T-cell (primary cell): ENCODE measurements at regions of chr3 and their contacts with region 1.

Region 1: DNA sequence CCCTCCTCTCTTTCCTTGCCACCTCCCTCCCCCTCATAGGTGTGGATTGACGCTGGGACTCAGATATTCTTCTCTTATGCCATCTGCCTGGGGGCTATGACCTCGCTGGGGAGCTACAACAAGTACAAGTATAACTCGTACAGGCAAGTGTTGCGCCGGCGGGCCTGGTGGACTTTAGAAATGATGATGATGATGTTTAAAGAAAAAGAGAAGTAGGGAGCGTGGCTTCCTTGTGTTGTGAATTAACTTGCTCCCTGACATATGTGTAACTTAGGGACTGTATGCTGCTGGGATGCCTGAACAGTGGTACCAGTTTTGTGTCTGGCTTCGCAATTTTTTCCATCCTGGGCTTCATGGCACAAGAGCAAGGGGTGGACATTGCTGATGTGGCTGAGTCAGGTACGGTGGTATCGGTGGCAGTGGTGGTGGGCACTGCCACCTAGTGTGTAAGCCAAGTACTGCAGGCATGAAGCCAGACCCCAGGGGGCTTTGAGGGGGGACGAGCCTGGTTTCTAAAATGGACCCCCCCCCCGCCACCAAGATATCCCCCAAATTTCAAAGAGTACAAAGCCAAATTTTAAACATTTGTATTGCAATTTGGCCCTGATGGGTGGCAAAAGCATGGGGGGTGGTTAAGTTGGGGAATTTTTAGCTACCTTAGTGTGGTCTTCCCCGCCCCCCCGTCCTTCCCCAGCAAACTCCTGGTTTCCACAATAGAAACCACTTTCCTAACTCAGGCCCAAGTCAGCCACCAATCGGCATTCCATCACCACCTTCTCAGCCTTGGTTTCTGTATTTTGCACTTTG is 65.6 kb downstream of the SLC6A6 start:
- DNase-seq: peak in 30 of 35 experiments; percentile 8 to 72 (median 31)
- ATAC-seq: peak; percentile 47 to 77 (median 66)
- H3K4me3 ChIP-seq: no peak overlapping the region
- H3K4me3 Mint-ChIP-seq: no peak overlapping the region
- H3K27ac ChIP-seq: no peak overlapping the region
- H3K27ac Mint-ChIP-seq: no peak overlapping the region
- H3K4me1 ChIP-seq: no peaks in the 10 kb centered on the region
- H3K4me1 Mint-ChIP-seq: no peaks in the 10 kb centered on the region
- H3K27me3 ChIP-seq: no peaks in the 10 kb centered on the region
- H3K27me3 Mint-ChIP-seq: no peaks in the 10 kb centered on the region

Region 2: GRCh38 chr3:14261229-14261628 is 206.8 kb before region 1 on chr3:
- CTCF ChIA-PET with region 1: interaction called, 14 to 16 read pairs
- POLR2A ChIA-PET with region 1: no interaction called
- DNase-seq: peak; percentile 10 to 84 (median 62)
- ATAC-seq: peak; percentile 52 to 75 (median 58)
- H3K4me3 ChIP-seq: no peak overlapping the region
- H3K4me3 Mint-ChIP-seq: no peak overlapping the region
- H3K27ac ChIP-seq: no peak overlapping the region
- H3K27ac Mint-ChIP-seq: no peak overlapping the region
- H3K4me1 ChIP-seq: no peaks in the 10 kb centered on the region
- H3K4me1 Mint-ChIP-seq: no peaks in the 10 kb centered on the region
- H3K27me3 ChIP-seq: peaks cover 0 to 9% of the 10 kb centered on the region in 2 experiments
- H3K27me3 Mint-ChIP-seq: peaks cover 5 to 7% of the 10 kb centered on the region in 2 donors

Region 3: DNA sequence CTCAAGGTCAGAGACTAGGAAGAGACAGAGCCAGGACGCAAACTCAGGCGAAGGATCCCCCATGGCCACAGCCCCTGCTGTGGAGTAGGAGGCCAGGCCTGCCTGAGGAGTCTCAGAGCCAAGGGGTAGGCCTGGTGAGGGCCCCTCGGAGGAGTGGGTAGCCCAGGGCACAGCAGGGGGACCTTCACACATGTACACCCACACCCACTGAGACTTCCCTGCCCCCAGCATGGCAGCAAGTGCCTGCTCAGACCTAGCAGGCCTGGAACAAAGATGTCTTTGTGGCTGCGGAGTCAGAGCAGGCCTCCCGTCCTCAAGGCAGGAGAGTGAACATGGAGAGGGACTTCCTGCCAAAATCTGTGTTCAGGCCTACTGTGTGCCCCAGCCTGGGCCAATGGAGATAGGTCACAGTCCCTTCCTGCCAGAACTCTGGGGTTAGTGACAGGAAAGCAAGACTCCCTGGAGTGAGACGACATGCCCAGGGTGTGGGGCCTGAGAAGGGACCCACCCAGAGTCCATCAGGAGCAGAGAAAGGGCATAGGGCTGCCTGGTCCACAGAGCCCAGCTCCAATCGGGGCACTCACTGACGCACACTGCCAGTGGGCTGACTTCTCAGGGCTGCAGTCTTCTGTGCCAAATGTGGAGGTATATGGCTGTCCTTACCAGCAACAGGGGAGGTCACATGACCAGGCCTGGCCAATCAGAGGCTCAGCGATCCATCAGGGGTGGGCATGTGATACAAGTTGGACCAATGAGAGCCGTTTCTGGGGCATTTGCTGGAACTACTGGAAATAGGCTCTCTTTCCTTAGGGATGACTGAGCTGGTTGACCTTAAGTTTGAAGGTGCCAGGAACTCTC is 69.8 kb after region 1 on chr3:
- CTCF ChIA-PET with region 1: no interaction called
- POLR2A ChIA-PET with region 1: no interaction called
- DNase-seq: no peak
- ATAC-seq: no peak
- H3K4me3 ChIP-seq: no peak overlapping the region
- H3K4me3 Mint-ChIP-seq: no peak overlapping the region
- H3K27ac ChIP-seq: no peak overlapping the region
- H3K27ac Mint-ChIP-seq: no peak overlapping the region
- H3K4me1 ChIP-seq: no peaks in the 10 kb centered on the region
- H3K4me1 Mint-ChIP-seq: no peaks in the 10 kb centered on the region
- H3K27me3 ChIP-seq: peaks cover 0 to 36% of the 10 kb centered on the region in 2 experiments
- H3K27me3 Mint-ChIP-seq: peaks cover 0 to 13% of the 10 kb centered on the region in 2 donors